ENCODE measurements at regions of chr17 and their contacts with region 1.

Region 1: DNA sequence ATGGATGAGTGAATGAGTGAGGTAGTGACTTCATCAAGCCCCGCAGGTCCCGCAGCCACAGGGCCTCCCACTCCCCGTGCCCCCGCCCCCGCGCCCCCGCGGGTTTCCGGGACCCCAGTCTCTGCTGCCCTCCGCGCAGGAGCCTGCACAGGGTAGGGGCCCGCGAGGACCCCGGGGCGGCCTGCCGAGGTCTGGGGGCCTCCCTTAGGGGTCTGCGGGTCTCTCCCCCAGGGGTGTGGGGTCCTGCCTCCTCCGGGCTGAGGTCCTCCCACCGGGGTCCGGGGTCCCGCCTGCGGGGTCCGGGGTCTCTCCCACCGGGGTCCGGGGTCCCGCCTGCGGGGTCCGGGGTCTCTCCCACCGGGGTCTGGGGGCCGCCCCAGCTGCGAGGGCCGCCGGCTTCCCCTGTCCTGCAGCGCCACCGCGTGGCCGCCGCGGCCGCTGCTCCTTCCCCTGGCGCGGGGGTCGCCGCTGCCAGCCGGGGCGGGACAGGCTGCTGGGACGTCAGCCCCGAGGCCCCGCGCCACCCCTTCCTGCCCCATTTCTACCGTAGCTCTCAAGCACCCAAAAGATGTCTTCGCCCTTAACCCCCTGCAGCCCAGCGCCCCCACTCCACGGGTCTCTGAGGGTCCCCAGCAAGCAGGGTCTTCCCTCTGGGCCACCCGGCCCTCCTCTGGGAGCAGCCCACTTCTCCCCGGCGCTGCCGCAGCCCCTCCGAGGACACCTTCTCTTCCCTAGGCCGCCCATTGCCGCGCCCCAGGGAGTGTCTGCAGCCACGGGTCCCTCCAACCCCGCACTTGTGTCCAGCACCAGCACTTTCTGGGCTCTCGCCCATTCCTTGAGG is 10.4 kb upstream of the CHMP6 start:
- DNase-seq: no peak
- H3K4me3 ChIP-seq: no peak overlapping the region
- H3K27ac ChIP-seq: no peak overlapping the region
- H3K4me1 ChIP-seq: no peaks in the 10 kb centered on the region
- H3K27me3 ChIP-seq: no peaks in the 10 kb centered on the region
- CTCF ChIP-seq: peak; percentile 35 to 47

Region 2: GRCh38 chr17:80195731-80196529 is 785.4 kb before region 1 on chr17:
- CTCF ChIA-PET with region 1: interaction called, 12 read pairs
- dilution Hi-C with region 1: no loop called
- in situ Hi-C with region 1: no loop called
- intact Hi-C with region 1: no loop called
- DNase-seq: no peak
- H3K4me3 ChIP-seq: no peak overlapping the region
- H3K27ac ChIP-seq: no peak overlapping the region
- H3K4me1 ChIP-seq: peaks cover 10% of the 10 kb centered on the region
- H3K27me3 ChIP-seq: no peaks in the 10 kb centered on the region
- CTCF ChIP-seq: peak; percentile 70 to 76

Region 3: GRCh38 chr17:80621997-80622357 is 359.3 kb before region 1 on chr17:
- CTCF ChIA-PET with region 1: no interaction called
- dilution Hi-C with region 1: no loop called
- in situ Hi-C with region 1: no loop called
- intact Hi-C with region 1: no loop called
- DNase-seq: no peak
- H3K4me3 ChIP-seq: no peak overlapping the region
- H3K27ac ChIP-seq: no peak overlapping the region
- H3K4me1 ChIP-seq: peaks cover 30% of the 10 kb centered on the region
- H3K27me3 ChIP-seq: no peaks in the 10 kb centered on the region
- CTCF ChIP-seq: no peak

Region 4: DNA sequence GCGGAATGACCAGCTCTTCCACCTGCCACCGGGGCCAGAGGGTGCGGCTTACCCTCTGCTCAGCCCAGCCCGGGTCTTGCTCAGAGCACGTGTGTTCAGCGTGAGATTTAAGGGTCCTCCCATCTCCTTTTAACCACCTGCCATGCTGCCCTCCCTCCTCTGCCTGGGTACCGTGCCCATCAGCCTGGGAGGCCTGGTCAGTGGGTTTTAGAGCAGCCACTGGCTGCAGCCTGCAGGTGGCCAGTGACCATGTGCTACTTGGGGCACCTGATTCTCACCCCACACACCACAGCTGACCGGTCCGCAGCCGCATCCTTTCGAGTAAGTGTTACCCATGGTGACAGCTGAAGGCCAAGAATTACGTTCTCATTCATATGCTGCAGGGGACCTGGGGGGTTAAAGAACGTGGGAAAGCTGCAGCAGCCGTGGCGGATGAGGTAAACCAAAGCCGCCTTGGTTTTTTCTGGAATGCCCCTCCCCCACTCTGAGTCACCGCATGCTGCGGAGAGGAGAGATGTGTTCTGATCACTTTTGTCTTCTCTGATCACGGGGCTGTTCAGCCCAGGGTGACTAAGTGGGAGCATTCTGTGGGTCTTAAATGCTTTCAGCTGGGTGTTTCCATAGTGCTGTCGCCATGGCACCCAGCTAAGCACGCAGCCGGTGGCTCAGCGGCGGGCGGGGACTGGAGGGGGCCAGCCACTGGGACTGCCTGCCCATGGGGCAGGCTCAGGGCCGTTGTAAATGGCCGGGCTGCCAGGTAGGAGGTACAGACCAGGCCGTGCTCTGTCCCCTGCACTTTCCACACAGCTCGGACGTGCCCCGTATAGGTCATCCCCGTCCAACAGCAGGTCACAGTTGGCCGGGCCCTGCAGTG is 113.5 kb after region 1 on chr17:
- CTCF ChIA-PET with region 1: no interaction called
- dilution Hi-C with region 1: no loop called
- in situ Hi-C with region 1: no loop called
- intact Hi-C with region 1: no loop called
- DNase-seq: peak; percentile 98
- H3K4me3 ChIP-seq: no peak overlapping the region
- H3K27ac ChIP-seq: peak overlapping the region; percentile 80
- H3K4me1 ChIP-seq: peaks cover 76% of the 10 kb centered on the region
- H3K27me3 ChIP-seq: no peaks in the 10 kb centered on the region
- CTCF ChIP-seq: peak in 1 of 2 donors; percentile 1

Measured in mammary epithelial cell (primary cell).